Right ventricle myocardium inferior (tissue), 1 donor: ENCODE measurements at regions of chr10 and their contacts with region 1.

Region 1: DNA sequence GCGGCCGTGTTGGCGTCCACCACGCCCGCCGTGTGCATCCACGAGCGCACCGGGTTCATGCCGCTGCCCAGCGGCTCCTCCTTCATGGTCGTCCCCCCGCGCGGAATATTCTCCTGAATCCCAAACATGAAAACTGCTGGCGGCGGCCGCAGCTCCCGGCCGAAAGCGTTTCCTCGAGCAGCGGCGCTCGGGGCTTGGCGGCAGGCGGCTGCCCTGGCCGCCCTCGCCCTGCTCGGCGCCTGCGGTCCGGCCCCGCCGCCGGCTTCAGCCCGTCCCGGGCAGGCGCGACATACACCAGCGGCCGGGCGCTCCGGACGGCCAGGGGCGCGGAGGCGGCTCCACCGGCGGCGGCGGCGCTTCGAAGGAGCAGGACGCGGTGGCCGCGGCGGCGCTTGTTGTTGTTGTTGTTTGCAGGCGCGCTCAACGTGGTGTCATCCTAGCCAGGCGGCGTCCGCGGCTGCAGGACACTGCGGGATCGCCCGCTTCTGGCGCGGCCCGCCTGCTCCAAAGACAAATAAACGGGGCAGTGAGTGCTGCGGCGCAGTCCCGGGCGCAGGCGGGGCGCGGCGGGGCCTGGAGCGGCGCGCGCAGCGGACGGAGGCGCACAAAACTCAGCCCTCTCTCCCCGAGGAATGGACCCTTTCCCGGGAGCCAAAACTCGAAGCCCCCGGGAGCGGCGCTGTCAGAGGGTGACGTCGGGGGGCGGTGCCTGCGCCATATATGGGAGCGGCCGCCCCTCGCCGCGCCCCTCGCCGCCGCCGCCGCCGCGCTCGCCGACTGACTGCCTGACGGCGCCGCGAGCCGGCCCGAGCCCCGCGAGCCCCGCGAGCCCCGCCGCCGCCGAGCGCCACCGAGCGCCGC is at the start of gene EBF3:
- DNase-seq: peak; percentile 93
- ATAC-seq: peak; percentile 89
- total RNA-seq, gene EBF3: 7.9 TPM

Region 2: GRCh38 chr10:129466703-129467358 is 497.0 kb before region 1 on chr10 and contains the start of gene MGMT:
- intact Hi-C with region 1: loop called (anchors 10 kb)
- DNase-seq: peak; percentile 98
- ATAC-seq: peak; percentile 98
- total RNA-seq, gene MGMT: 14.5 TPM

Region 3: DNA sequence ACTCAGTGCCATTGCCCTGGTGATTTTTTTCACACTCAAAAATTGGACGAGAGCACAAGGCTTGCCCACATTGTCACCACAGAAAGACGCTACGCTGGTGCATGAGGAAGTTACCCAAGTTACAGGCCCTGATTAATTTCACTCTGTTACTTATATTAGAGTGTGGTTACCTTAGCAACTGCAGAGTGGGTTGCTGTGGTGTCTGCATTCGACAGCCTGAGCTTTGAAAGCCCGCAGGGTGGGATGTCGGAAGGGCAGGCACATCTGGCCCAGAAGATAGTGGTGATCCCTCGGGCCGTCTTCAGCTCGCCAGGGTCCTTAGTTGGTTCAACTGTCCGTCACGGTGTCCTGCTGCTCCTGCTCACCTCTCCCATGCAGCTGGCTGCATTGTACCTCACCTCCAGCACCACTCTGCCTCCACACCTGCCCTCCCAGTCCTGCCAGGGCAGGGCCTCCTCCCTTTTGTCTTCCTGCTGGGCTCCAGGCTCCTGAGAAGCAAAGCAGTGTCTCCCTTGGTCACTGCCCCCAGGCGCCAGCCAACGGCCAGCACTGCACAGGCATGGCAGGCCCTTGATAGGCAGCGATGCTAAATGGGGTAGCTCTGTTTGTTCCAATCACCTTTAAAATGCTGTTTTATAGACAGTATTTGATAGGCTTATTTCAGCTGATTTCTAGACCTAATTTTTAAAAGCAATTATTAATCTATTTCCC is 167.0 kb before region 1 on chr10:
- intact Hi-C with region 1: no loop called
- DNase-seq: no peak
- ATAC-seq: no peak

Region 4: DNA sequence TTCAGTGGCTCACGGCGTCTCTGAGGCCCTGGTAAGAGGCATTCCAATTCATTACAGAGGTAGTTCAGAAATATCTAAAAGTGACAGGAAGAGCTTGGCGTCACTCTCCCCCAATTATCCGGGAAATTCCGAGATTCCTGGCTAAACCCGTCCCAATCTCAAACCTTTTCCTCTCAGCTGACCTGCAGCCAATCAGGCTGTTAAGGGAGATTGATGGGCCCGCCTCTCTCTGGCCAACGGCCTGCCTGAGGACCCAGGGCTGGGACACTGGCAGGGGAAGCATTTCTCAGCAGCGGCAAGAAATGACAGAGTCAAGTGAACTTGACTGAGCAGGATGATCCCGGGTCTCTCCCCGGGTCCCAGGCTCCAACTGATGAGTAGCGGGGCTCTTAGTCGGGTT is 72.1 kb before region 1 on chr10:
- intact Hi-C with region 1: loop called (anchors 2 kb)
- DNase-seq: no peak
- ATAC-seq: peak; percentile 31

Region 5: DNA sequence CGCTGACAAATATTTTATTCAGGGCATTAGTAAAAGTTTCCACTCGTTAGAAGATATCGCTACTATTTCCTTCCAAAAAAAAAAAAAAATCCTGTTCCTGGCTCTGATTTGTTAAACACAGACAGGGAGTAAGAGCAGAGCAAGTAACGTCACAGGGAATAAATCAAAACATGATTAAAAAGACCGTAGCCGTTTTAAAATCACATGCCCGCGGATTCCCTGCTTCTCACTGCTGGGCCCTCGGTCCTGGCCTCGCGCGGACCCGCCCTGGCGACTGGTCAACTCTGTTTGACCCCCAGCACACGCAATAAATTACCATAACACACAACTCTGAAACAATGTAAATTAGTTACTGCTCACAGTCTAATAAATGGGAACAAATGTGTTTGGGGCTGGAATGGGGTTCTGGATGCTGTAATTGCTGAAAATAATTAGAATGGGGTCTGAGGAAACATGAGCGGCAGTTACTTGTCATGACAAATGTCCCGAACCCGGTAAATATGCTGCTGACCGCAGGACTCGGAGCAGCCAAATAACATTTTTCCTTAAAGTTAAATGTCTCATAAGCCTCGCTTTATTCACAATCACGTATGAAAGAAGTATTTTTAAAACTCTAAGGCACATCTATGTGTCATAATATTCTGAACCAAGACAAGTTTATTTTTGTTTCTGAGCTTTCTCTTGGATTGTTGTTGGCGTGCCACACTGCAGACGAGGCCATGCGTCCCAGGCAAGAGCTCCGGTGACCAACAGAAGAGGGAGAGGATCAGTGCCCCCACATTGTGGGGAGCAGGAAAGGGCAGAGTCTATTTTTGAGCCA is 17.7 kb before region 1 on chr10:
- intact Hi-C with region 1: loop called (anchors 2 kb)
- DNase-seq: no peak
- ATAC-seq: peak; percentile 68